ENCODE measurements at regions of chr1 and their contacts with region 1.

Region 1: DNA sequence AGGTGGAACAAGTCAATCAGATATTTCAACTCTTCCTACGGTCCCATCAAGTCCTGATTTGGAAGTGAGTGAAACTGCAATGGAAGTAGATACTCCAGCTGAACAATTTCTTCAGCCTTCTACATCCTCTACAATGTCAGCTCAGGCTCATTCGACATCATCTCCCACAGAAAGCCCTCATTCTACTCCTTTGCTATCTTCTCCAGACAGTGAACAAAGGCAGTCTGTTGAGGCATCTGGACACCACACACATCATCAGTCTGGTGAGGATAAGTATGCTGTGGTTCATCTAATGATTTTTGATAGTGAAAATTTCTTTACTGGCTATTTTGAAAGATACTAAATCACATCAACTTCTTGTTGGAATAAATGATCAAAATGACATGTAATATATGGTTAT is 67.7 kb upstream of the MPC2 start:
- DNase-seq: no peak
- H3K4me3 ChIP-seq: no peak overlapping the region
- H3K4me3 Mint-ChIP-seq: no peak overlapping the region
- H3K27ac Mint-ChIP-seq: no peak overlapping the region
- H3K4me1 ChIP-seq: no peaks in the 10 kb centered on the region
- H3K4me1 Mint-ChIP-seq: no peaks in the 10 kb centered on the region
- H3K27me3 ChIP-seq: no peaks in the 10 kb centered on the region
- H3K27me3 Mint-ChIP-seq: no peaks in the 10 kb centered on the region
- CTCF ChIP-seq: no peak

Region 2: DNA sequence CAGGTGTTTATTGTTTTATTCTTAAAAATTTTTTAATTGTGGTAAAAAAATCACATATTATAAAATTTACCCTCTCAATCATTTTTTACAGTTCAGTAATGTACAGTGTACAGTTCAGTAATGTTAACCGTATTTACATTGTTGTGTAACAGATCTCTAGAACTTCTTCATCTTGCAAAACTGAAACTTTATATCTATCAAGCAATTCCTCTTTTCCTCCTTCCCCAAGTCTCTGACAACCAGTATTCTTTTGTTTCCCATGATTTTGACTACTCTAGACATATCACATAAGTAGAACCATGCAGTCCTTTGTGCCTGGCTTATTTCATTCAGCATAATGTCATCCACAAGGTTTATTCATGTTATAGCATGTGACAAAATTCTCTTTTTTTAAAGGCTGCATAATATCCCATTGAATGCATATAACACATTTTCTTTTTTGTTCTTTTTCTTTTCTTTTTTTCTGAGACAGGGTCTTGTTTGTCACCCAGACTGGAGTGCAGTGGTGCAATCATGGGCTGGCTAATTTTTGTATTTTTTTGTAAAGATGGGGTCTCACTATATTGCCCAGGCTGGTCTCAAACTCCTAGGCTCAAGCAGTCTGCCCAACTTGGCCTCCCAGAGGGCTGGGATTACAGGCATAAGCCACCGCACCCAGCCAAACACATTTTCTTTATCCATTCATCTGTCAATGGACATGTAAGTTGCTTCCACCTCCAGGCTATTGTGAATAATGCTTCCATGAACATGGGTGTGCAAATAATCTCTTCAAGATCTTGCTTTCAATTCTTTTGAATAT is 391.7 kb before region 1 on chr1:
- CTCF ChIA-PET with region 1: no interaction called
- POLR2A ChIA-PET with region 1: no interaction called
- intact Hi-C with region 1: loop called (anchors 5 kb)
- DNase-seq: no peak
- H3K4me3 ChIP-seq: no peak overlapping the region
- H3K4me3 Mint-ChIP-seq: no peak overlapping the region
- H3K27ac Mint-ChIP-seq: no peak overlapping the region
- H3K4me1 ChIP-seq: peaks cover 6% of the 10 kb centered on the region; the same call in 1 of the 2 replicates
- H3K4me1 Mint-ChIP-seq: peaks cover 7% of the 10 kb centered on the region
- H3K27me3 ChIP-seq: no peaks in the 10 kb centered on the region
- H3K27me3 Mint-ChIP-seq: peaks cover 6% of the 10 kb centered on the region
- CTCF ChIP-seq: no peak

Region 3: GRCh38 chr1:168019407-168019806 is 14.9 kb after region 1 on chr1:
- CTCF ChIA-PET with region 1: no interaction called
- POLR2A ChIA-PET with region 1: no interaction called
- intact Hi-C with region 1: loop called (anchors 1 kb)
- DNase-seq: no peak
- H3K4me3 ChIP-seq: no peak overlapping the region
- H3K4me3 Mint-ChIP-seq: no peak overlapping the region
- H3K27ac Mint-ChIP-seq: no peak overlapping the region
- H3K4me1 ChIP-seq: no peaks in the 10 kb centered on the region
- H3K4me1 Mint-ChIP-seq: peaks cover 5% of the 10 kb centered on the region
- H3K27me3 ChIP-seq: no peaks in the 10 kb centered on the region
- H3K27me3 Mint-ChIP-seq: no peaks in the 10 kb centered on the region
- CTCF ChIP-seq: no peak

Measured in Caco-2 (cell line).